Naive thymus-derived CD4-positive, alpha-beta T cell (primary cell): ENCODE measurements at regions of chr22 and their contacts with region 1.

Region 1: GRCh38 chr22:36454916-36455570 is 26.4 kb downstream of the TXN2 start:
- DNase-seq: peak; percentile 87 to 97 (median 92)
- ATAC-seq: peak; percentile 83
- H3K4me3 ChIP-seq: peak overlapping the region; percentile 83
- H3K4me3 Mint-ChIP-seq: peak overlapping the region; percentile 68 to 87 (median 78)
- H3K27ac ChIP-seq: peak overlapping the region; percentile 99
- H3K27ac Mint-ChIP-seq: peak overlapping the region; percentile 71 to 99 (median 96)
- H3K4me1 ChIP-seq: peaks cover 46 to 48% of the 10 kb centered on the region in 2 donors
- H3K4me1 Mint-ChIP-seq: peaks cover 21 to 54% (median 45%) of the 10 kb centered on the region in 7 donors
- H3K27me3 ChIP-seq: no peaks in the 10 kb centered on the region
- H3K27me3 Mint-ChIP-seq: no peaks in the 10 kb centered on the region

Region 2: GRCh38 chr22:36331306-36331911 is 123.6 kb before region 1 on chr22:
- CTCF ChIA-PET with region 1: interaction called, 3 read pairs
- POLR2A ChIA-PET with region 1: interaction called, 5 read pairs
- intact Hi-C with region 1: loop called (anchors 1 kb)
- DNase-seq: peak; percentile 42 to 83 (median 73)
- ATAC-seq: peak; percentile 78
- H3K4me3 ChIP-seq: peak overlapping the region; percentile 57
- H3K4me3 Mint-ChIP-seq: peak overlapping the region; percentile 83 to 95 (median 92)
- H3K27ac ChIP-seq: peak overlapping the region; percentile 82
- H3K27ac Mint-ChIP-seq: peak overlapping the region; percentile 96 to 100 (median 99)
- H3K4me1 ChIP-seq: peaks cover 87 to 92% of the 10 kb centered on the region in 2 donors
- H3K4me1 Mint-ChIP-seq: peaks cover 84 to 100% (median 98%) of the 10 kb centered on the region in 7 donors
- H3K27me3 ChIP-seq: no peaks in the 10 kb centered on the region
- H3K27me3 Mint-ChIP-seq: no peaks in the 10 kb centered on the region

Region 3: DNA sequence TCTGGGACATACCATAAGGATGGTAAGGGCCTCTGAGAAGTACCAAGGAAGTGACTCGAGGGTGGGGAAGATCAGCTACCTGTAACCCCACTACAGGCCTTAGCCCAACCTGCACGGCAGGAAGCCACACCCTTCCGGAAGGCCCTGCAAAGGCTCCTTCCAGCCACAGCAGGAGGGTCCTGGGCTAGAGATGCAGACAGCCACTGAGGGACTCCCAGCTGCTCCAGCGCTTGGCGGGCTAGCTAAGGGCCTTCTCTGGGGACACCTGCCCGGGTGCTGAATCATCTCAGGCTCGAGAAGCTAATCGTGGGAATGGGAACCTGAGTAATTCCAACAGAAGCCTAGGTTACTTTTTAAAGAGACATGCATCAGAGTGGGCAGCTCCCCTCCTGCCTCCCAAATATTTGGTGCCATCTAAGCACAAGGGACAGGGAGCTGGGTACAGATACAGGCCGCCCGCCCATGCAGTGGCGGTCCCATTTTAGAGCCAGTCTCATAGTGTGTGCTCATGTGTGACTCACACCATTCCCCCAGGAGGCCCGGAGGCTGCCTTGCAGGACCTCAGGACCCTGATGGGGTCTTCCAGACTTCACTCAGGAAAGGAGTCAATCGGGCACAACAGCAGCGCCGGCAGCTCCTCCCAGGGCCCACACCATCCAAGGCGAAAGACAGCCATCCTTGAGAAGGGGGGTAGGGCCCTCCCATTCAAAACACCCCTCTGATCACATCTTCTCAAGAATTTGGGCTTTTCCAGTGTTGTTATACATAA is 75.3 kb before region 1 on chr22:
- CTCF ChIA-PET with region 1: no interaction called
- POLR2A ChIA-PET with region 1: interaction called, 18 read pairs
- intact Hi-C with region 1: loop called in 1 of 2 experiments (anchors 2 kb)
- DNase-seq: peak in 7 of 9 donors; percentile 59 to 68 (median 63)
- ATAC-seq: peak; percentile 56
- H3K4me3 ChIP-seq: peak overlapping the region; percentile 47
- H3K4me3 Mint-ChIP-seq: peak overlapping the region; percentile 80 to 92 (median 88)
- H3K27ac ChIP-seq: peak overlapping the region; percentile 80
- H3K27ac Mint-ChIP-seq: peak overlapping the region; percentile 95 to 100 (median 98)
- H3K4me1 ChIP-seq: peaks cover 84% of the 10 kb centered on the region in 2 donors
- H3K4me1 Mint-ChIP-seq: peaks cover 41 to 95% (median 89%) of the 10 kb centered on the region in 7 donors
- H3K27me3 ChIP-seq: no peaks in the 10 kb centered on the region
- H3K27me3 Mint-ChIP-seq: no peaks in the 10 kb centered on the region

Region 4: DNA sequence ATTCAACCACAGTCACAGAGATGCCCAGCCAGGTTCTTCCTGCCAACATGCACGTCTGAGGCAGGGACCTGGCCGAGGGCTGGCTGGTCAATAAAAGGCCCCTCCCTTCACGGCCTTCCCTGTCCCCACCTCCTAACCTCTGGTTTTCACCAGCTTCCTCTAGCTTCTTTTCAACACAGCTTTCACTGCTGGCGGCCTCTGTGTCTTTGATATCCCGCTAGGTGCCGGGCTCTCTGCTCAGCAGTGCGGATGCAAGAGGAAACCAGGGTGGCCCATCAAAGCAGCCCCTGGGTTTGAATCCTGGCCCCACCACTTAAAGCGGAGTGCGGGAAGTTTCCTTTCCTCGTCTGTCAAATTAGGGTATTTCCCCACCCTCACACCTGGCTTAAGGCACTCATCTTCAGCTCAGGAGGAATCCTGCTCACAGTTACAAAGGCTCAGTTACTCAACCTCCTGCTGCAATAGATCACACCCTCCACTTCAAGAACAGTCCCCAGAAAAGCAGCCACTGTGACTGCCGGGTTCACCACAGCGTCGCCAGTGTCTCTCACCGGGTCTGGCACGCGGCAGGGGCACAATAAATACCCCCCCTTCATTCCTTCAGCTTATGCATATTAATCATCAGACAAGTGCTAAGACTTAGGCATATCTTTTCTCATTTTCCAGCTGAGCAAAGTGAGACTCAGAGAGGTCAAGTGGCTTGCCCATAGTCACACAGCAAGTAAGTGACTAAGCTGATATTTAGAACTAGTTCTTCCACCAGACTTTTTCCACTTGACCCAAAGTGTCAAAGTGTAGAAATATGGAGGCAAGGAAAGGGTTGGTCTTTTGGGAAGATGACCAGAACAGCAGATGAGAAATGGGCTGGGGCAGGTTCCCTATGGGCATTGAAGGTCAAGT is 19.3 kb before region 1 on chr22:
- CTCF ChIA-PET with region 1: interaction called, 4 read pairs
- POLR2A ChIA-PET with region 1: interaction called, 8 read pairs
- intact Hi-C with region 1: loop called (anchors 1 to 2 kb)
- DNase-seq: peak; percentile 35 to 89 (median 76)
- ATAC-seq: peak; percentile 93
- H3K4me3 ChIP-seq: peak overlapping the region; percentile 6
- H3K4me3 Mint-ChIP-seq: peak overlapping the region; percentile 61 to 82 (median 72)
- H3K27ac ChIP-seq: peak overlapping the region; percentile 60
- H3K27ac Mint-ChIP-seq: peak overlapping the region; percentile 83 to 96 (median 91)
- H3K4me1 ChIP-seq: peaks cover 20 to 21% of the 10 kb centered on the region in 2 donors
- H3K4me1 Mint-ChIP-seq: peaks cover 21 to 47% (median 32%) of the 10 kb centered on the region in 7 donors
- H3K27me3 ChIP-seq: no peaks in the 10 kb centered on the region
- H3K27me3 Mint-ChIP-seq: no peaks in the 10 kb centered on the region

Region 5: DNA sequence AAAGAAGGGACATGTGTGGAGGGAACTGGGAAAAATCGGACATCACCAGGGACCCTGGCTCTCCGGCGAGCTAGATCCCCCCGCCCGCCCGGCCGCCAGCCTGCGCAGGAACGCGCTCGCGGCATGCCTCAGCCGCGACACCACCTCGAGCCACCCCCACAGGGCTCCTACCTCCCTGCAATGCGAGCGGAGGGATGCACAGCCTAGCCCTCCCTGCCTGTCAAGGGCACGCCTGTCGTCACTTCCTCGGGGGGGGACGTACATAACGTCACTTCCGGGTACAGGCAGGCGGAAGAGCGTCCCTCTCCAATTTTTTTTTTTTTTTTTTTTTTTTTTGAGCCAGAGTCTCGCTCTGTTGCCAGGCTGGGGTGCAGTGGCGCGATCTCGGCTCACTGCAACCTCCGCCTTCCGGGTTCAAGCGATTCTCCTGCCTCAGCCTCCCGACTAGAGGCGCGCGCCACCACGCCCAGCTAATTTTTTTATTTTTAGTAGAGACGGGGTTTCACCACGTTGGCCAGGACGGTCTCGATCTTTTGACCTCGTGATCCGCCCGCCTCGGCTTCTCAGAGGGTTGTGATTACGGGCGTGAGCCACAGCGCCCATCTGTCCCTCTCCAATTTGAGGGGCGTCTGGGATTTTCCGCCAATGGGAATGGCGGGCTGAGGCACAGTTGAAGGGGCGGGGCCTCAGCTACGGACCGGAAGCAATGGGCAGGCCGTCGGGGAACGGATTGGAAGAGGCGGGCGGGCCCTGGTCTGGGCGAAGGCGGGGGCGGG is 26.5 kb after region 1 on chr22 and contains the start of gene TXN2:
- CTCF ChIA-PET with region 1: no interaction called
- POLR2A ChIA-PET with region 1: no interaction called
- intact Hi-C with region 1: loop called (anchors 1 kb)
- DNase-seq: peak; percentile 91 to 99 (median 98)
- ATAC-seq: peak; percentile 90
- H3K4me3 ChIP-seq: peak within 1 kb of the TSS; percentile 55
- H3K4me3 Mint-ChIP-seq: peak within 1 kb of the TSS; percentile 90 to 100 (median 96)
- H3K27ac ChIP-seq: peak within 1 kb of the TSS; percentile 96
- H3K27ac Mint-ChIP-seq: peak within 1 kb of the TSS; percentile 78 to 99 (median 95)
- H3K4me1 ChIP-seq: peaks cover 8 to 15% of the 10 kb centered on the region in 2 donors
- H3K4me1 Mint-ChIP-seq: peaks cover 15 to 30% (median 18%) of the 10 kb centered on the region in 7 donors
- H3K27me3 ChIP-seq: no peaks in the 10 kb centered on the region
- H3K27me3 Mint-ChIP-seq: peaks cover 0 to 2% (median 0%) of the 10 kb centered on the region in 5 donors
- total RNA-seq, gene TXN2: 35.5 to 69.9 (median 37.7) TPM